Ovary (tissue), 10 donors: ENCODE measurements at regions of chr18 and their contacts with region 1.

Region 1: GRCh38 chr18:62186774-62187542 is at the starts of genes PIGN and RELCH:
- DNase-seq: peak; percentile 92 to 96 (median 94)
- H3K4me3 ChIP-seq: peak within 1 kb of the TSS; percentile 70
- H3K27ac ChIP-seq: peak within 1 kb of the TSS in 1 of 2 donors; percentile 50
- H3K4me1 ChIP-seq: peaks cover 7% of the 10 kb centered on the region
- H3K27me3 ChIP-seq: no peaks in the 10 kb centered on the region
- CTCF ChIP-seq: no peak
- EP300 ChIP-seq: no peak
- POLR2A ChIP-seq: peak; percentile 19
- total RNA-seq, gene PIGN: 17.7 to 29.1 (median 26.1) TPM
- total RNA-seq, gene RELCH: 21.5 to 32.7 (median 27.8) TPM

Region 2: GRCh38 chr18:62249478-62250097 is 62.6 kb after region 1 on chr18:
- intact Hi-C with region 1: loop called in 3 of 4 experiments (anchors 10 kb)
- DNase-seq: peak; percentile 55 to 77 (median 56)
- H3K4me3 ChIP-seq: no peak overlapping the region
- H3K27ac ChIP-seq: no peak overlapping the region
- H3K4me1 ChIP-seq: peaks cover 3% of the 10 kb centered on the region
- H3K27me3 ChIP-seq: no peaks in the 10 kb centered on the region
- CTCF ChIP-seq: peak; percentile 44 to 51 (median 46)
- EP300 ChIP-seq: no peak
- POLR2A ChIP-seq: no peak

Region 3: GRCh38 chr18:62258616-62259015 is 71.7 kb after region 1 on chr18:
- intact Hi-C with region 1: loop called in 2 of 4 experiments (anchors 5 to 10 kb)
- DNase-seq: no peak
- H3K4me3 ChIP-seq: no peak overlapping the region
- H3K27ac ChIP-seq: no peak overlapping the region
- H3K4me1 ChIP-seq: no peaks in the 10 kb centered on the region
- H3K27me3 ChIP-seq: no peaks in the 10 kb centered on the region
- CTCF ChIP-seq: no peak
- EP300 ChIP-seq: no peak
- POLR2A ChIP-seq: no peak